H1 (cell line): ENCODE measurements at regions of chr12 and their contacts with region 1.

Region 1: DNA sequence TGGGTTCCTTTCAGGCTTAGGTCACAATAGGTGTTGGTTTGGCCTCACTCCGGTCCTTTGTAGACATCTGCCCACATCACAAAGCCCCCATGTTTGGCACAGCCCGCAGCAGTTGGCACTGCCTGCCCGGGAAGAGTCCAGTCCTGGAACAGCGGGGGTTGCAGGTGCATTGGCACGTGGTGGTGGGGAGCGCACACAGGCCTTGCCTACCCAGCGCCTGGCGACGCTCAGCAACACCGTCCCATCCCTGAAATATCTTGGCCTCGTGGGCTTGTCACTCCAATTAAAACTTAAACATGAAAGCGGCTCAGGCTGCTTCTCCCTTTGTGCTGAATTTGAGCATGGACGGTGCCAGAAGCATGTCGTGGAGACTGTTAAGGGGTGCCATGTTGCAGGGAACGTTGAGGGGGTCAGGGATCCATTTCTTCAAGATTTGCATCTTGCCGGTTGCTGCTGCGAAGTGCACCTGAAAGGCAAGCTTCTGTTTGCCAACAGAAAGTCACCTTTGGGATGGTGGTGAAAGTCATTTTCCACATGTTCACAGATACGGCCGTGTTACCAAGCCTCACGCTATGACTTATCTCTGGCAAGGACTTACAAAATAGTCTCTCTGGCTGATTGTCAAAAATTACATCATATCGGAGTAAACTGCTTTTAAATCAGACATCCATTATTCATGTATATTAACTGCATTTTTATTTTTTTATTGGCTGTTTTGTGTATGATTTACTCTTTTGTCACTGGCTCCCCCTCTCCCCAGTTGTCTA is 91.5 kb downstream of the FBXW8 start:
- DNase-seq: no peak
- H3K4me3 ChIP-seq: no peak overlapping the region
- H3K27ac ChIP-seq: no peak overlapping the region
- H3K4me1 ChIP-seq: peaks cover 0 to 24% (median 2%) of the 10 kb centered on the region in 4 experiments; a peak in 3 of 7 replicates
- H3K27me3 ChIP-seq: no peaks in the 10 kb centered on the region
- CTCF ChIP-seq: no peak
- EP300 ChIP-seq: no peak
- POLR2A ChIP-seq: no peak
- RAD21 ChIP-seq: no peak

Region 2: DNA sequence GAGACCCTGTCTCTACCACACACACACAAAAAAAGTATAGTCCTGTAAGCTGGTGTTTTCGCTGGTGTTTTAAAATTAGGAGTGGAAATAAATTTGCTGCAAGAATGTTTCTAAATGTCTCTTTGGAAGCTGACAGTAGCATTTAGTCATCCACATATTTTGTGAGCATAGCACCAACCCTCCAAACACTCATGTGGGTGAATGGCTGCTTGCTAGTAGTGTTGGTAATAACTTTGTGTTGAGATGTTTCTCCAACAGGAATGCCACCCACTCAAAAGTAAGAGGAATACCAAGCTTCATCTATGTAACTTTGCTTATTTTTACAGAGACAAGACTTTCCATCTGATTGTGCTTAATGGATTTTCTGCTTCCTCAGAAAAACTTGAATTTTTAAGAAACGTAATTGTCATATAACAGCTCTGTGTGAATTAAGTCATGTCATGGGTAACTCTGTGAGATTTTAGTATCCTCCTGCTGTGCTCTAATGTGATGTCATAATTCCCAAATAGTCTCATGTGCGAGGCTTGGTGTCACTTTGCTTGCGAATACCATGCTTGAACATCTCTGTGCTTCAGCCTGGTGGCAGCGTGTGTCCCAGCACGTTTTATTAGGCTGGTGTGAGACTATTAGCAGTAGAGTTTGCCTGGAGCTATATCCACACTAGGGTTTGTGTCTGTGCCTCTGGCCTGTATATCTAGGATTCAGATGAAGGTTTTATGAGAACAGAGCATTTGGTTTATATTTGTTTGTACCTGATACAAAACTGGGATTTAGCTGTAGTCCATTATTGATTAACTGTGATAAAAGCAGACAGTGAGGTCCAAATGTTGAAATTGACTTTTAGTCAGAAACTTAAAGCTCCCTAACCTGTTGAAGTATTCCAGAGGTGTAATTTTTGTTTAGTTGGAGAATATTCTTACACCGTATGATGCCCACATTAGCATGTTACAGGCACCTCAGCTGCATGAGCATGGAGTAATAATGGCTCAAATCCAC is 11.0 kb before region 1 on chr12:
- CTCF ChIA-PET with region 1: interaction called, 14 read pairs
- POLR2A ChIA-PET with region 1: interaction called, 3 read pairs
- DNase-seq: no peak
- H3K4me3 ChIP-seq: no peak overlapping the region
- H3K27ac ChIP-seq: no peak overlapping the region
- H3K4me1 ChIP-seq: no peaks in the 10 kb centered on the region
- H3K27me3 ChIP-seq: no peaks in the 10 kb centered on the region
- CTCF ChIP-seq: no peak
- EP300 ChIP-seq: no peak
- POLR2A ChIP-seq: no peak
- RAD21 ChIP-seq: no peak